CD4-positive, alpha-beta T cell (primary cell): ENCODE measurements at regions of chr20 and their contacts with region 1.

Region 1: DNA sequence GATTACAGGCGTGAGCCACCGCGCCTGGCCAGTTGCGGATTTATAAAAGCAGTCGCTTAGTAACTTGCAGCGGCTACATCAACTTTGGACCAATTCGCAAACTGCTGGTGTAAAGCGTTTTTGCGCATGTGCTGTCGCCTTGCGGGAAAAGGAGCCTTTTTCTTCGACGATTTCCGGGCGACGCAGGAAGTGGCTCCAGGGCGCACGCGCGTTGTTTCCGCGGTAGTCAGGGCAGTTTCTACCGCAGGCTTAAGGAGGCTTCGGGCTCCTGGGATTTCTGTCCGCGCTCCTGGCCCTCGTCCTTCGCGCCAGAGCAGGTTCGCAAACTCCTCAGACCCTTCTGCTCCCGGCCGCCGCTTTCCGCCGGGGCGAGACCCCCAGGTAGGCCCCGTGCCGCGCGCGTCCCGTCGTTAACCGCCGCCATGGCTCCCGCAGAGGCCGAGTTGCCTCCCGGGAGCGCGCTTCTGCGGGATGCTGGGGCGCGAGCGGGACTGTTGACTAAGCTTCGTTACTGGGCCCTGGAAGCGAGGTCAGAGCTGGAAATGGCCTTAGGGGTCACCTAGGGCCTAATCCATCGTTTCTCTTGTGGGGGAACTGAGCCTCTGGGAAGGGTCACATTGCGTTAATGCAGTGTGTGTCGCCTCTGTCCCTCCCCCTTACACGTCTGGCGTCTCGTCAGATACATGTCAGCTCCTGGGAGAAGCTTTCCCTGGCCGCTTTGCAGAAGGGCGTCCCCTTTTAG is at the start of gene RAE1:
- DNase-seq: peak; percentile 82 to 97 (median 89)
- ATAC-seq: peak; percentile 82
- H3K4me3 ChIP-seq: peak within 1 kb of the TSS; percentile 98
- H3K4me3 Mint-ChIP-seq: peak within 1 kb of the TSS; percentile 94
- H3K27ac ChIP-seq: peak within 1 kb of the TSS; percentile 73 to 74
- H3K27ac Mint-ChIP-seq: peak within 1 kb of the TSS; percentile 89
- H3K4me1 ChIP-seq: peaks cover 21% of the 10 kb centered on the region
- H3K4me1 Mint-ChIP-seq: peaks cover 55% of the 10 kb centered on the region
- H3K27me3 ChIP-seq: no peaks in the 10 kb centered on the region
- H3K27me3 Mint-ChIP-seq: no peaks in the 10 kb centered on the region
- CTCF ChIP-seq: no peak
- total RNA-seq, gene RAE1: 58.8 to 60.7 TPM

Region 2: GRCh38 chr20:56247948-56248782 is 1103.0 kb before region 1 on chr20 and contains the start of gene MC3R:
- CTCF ChIA-PET with region 1: no interaction called
- POLR2A ChIA-PET with region 1: no interaction called
- intact Hi-C with region 1: loop called in 1 of 2 experiments (anchors 5 kb)
- DNase-seq: peak in 13 of 14 experiments; percentile 2 to 56 (median 17)
- ATAC-seq: no peak
- H3K4me3 ChIP-seq: no peak within 1 kb of the TSS
- H3K4me3 Mint-ChIP-seq: no peak within 1 kb of the TSS
- H3K27ac ChIP-seq: no peak within 1 kb of the TSS
- H3K27ac Mint-ChIP-seq: no peak within 1 kb of the TSS
- H3K4me1 ChIP-seq: no peaks in the 10 kb centered on the region
- H3K4me1 Mint-ChIP-seq: no peaks in the 10 kb centered on the region
- H3K27me3 ChIP-seq: peaks cover 17 to 18% of the 10 kb centered on the region in 2 experiments
- H3K27me3 Mint-ChIP-seq: peaks cover 72% of the 10 kb centered on the region
- CTCF ChIP-seq: peak; percentile 41
- total RNA-seq, gene MC3R: not detected

Region 3: GRCh38 chr20:56392282-56393137 is 958.7 kb before region 1 on chr20 and contains the start of gene CSTF1:
- CTCF ChIA-PET with region 1: no interaction called
- POLR2A ChIA-PET with region 1: interaction called, 4 read pairs
- intact Hi-C with region 1: loop called in 1 of 2 experiments (anchors 5 kb)
- DNase-seq: peak; percentile 98 to 100 (median 99)
- ATAC-seq: peak; percentile 83
- H3K4me3 ChIP-seq: peak within 1 kb of the TSS; percentile 88
- H3K4me3 Mint-ChIP-seq: no peak within 1 kb of the TSS
- H3K27ac ChIP-seq: peak within 1 kb of the TSS; percentile 89 to 93
- H3K27ac Mint-ChIP-seq: no peak within 1 kb of the TSS
- H3K4me1 ChIP-seq: peaks cover 24% of the 10 kb centered on the region
- H3K4me1 Mint-ChIP-seq: peaks cover 28% of the 10 kb centered on the region
- H3K27me3 ChIP-seq: no peaks in the 10 kb centered on the region
- H3K27me3 Mint-ChIP-seq: no peaks in the 10 kb centered on the region
- CTCF ChIP-seq: no peak
- total RNA-seq, gene CSTF1: 20.7 to 21.8 TPM

Region 4: GRCh38 chr20:56468316-56469082 is 882.7 kb before region 1 on chr20 and contains the start of gene RTF2:
- CTCF ChIA-PET with region 1: no interaction called
- POLR2A ChIA-PET with region 1: no interaction called
- intact Hi-C with region 1: loop called in 1 of 2 experiments (anchors 2 kb)
- DNase-seq: peak; percentile 91 to 98 (median 94)
- ATAC-seq: peak; percentile 97
- H3K4me3 ChIP-seq: peak within 1 kb of the TSS; percentile 91
- H3K4me3 Mint-ChIP-seq: peak within 1 kb of the TSS; percentile 99
- H3K27ac ChIP-seq: peak within 1 kb of the TSS; percentile 90 to 93
- H3K27ac Mint-ChIP-seq: peak within 1 kb of the TSS; percentile 98
- H3K4me1 ChIP-seq: peaks cover 38% of the 10 kb centered on the region
- H3K4me1 Mint-ChIP-seq: peaks cover 43% of the 10 kb centered on the region
- H3K27me3 ChIP-seq: no peaks in the 10 kb centered on the region
- H3K27me3 Mint-ChIP-seq: no peaks in the 10 kb centered on the region
- CTCF ChIP-seq: no peak
- total RNA-seq, gene RTF2: 52.7 to 55.2 TPM

Region 5: DNA sequence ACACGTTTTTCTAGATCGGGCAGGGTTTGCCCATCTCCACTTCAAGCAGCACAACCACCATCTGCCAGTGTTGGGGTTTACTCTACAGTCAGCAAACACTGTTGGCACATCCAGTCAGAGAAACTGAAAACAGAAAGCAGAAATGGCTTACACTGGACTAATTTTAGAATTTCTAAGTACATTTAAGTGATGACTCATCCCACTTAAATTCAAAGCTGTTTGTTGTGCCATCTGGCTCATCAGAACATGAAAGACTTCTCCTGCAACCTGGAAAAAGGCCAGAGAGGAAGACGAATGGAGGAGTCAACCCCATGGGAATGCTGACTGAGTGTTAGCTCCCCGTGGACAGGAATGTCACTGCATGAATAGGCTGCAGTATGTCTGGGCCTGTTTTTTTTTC is 796.3 kb before region 1 on chr20:
- CTCF ChIA-PET with region 1: no interaction called
- POLR2A ChIA-PET with region 1: no interaction called
- intact Hi-C with region 1: loop called in 1 of 2 experiments (anchors 1 kb)
- DNase-seq: peak in 3 of 14 experiments; percentile 16 to 29 (median 23)
- ATAC-seq: no peak
- H3K4me3 ChIP-seq: no peak overlapping the region
- H3K4me3 Mint-ChIP-seq: no peak overlapping the region
- H3K27ac ChIP-seq: no peak overlapping the region
- H3K27ac Mint-ChIP-seq: no peak overlapping the region
- H3K4me1 ChIP-seq: no peaks in the 10 kb centered on the region
- H3K4me1 Mint-ChIP-seq: no peaks in the 10 kb centered on the region
- H3K27me3 ChIP-seq: no peaks in the 10 kb centered on the region
- H3K27me3 Mint-ChIP-seq: no peaks in the 10 kb centered on the region
- CTCF ChIP-seq: no peak

Region 6: DNA sequence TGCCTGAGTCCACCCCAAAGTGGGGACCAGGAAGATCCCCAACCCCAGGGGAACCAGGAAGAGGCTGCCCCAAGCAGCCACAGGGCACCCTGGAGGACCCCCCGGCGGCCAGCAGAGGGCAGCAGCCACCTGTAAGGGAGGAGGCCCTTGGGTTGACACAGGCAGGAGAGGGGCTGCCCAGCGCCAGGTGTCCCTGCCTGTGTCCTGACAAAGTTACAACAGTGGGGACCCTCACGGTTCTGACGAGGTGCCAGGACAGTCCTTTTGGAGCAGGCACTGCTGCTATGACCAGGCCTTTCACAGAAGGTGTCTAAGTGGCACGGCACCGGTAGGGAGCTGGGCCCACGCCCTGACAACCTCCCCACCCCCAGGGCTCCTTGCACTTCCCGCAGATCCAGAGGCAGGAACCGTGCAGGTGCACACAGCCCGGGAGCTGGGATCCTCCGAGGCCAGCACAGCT is 261.5 kb before region 1 on chr20:
- CTCF ChIA-PET with region 1: no interaction called
- POLR2A ChIA-PET with region 1: no interaction called
- intact Hi-C with region 1: loop called in 1 of 2 experiments (anchors 1 kb)
- DNase-seq: peak; percentile 17 to 66 (median 44)
- ATAC-seq: peak; percentile 64
- H3K4me3 ChIP-seq: no peak overlapping the region
- H3K4me3 Mint-ChIP-seq: no peak overlapping the region
- H3K27ac ChIP-seq: no peak overlapping the region
- H3K27ac Mint-ChIP-seq: no peak overlapping the region
- H3K4me1 ChIP-seq: peaks cover 8% of the 10 kb centered on the region
- H3K4me1 Mint-ChIP-seq: peaks cover 13% of the 10 kb centered on the region
- H3K27me3 ChIP-seq: peaks cover 4% of the 10 kb centered on the region in 2 experiments
- H3K27me3 Mint-ChIP-seq: peaks cover 10% of the 10 kb centered on the region
- CTCF ChIP-seq: peak; percentile 62